Activated T-helper 1 cell treated with anti-CD3 and anti-CD28 coated beads, Interleukin-12 subunit alpha, Interleukin-12 subunit beta, Interleukin-2, Interleukin-4 antibody, amounts not matched to agents 30 ng/mL and 10 ng/mL and 1 ng/mL, durations not matched to agents 14 hours and 24 hours and 36 hours (primary cell): ENCODE measurements at regions of chrX and their contacts with region 1.

Region 1: DNA sequence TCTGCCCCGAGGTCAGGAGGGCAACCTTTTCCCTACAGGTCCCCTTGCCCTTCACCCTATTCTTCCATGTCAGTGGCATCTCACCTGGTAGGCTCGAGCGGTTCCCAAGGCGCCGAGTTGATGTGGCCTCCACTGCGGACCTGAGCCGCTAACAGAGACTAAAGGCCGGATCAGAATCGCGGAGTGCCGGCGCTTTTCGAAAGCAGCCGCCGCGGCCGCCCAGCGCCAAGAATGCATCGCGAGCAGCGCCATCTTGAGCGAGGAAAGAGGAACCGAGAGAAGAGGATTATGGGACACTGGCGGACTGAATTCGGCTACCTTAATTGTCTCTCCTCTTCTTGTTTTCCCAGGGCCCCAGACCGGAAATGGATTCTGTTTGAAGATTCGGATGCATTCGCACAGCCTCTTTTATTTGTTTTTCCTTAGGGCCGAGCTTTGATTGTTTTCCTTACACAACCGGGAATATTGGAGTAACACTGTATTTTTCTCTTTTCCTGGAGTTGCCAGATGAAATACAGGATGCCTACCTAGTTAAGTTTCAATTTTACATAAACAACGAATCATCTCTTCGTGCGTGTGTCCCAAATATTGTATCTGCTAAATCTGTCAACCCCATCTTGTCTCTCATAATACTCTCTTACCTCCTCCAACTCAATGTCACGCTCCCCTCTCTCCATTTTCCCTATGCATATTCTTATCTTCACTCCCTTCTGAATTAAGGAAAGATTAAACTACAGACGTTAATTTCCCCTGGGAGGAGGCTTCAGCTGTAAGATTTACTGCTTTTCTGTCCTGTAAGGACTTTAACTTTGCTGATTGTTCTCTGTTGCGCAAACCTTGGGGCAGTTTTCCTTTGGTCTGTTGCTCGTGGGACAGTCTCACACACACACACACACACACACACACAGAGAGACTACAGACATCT is at the start of gene ABCB7:
- DNase-seq: peak; percentile 52
- H3K4me3 Mint-ChIP-seq: peak within 1 kb of the TSS; percentile 100
- H3K27ac Mint-ChIP-seq: peak within 1 kb of the TSS; percentile 98
- H3K4me1 Mint-ChIP-seq: peaks cover 40% of the 10 kb centered on the region
- H3K27me3 Mint-ChIP-seq: no peaks in the 10 kb centered on the region
- total RNA-seq, gene ABCB7: 37.4 and 38.1 TPM in 2 replicates

Region 2: DNA sequence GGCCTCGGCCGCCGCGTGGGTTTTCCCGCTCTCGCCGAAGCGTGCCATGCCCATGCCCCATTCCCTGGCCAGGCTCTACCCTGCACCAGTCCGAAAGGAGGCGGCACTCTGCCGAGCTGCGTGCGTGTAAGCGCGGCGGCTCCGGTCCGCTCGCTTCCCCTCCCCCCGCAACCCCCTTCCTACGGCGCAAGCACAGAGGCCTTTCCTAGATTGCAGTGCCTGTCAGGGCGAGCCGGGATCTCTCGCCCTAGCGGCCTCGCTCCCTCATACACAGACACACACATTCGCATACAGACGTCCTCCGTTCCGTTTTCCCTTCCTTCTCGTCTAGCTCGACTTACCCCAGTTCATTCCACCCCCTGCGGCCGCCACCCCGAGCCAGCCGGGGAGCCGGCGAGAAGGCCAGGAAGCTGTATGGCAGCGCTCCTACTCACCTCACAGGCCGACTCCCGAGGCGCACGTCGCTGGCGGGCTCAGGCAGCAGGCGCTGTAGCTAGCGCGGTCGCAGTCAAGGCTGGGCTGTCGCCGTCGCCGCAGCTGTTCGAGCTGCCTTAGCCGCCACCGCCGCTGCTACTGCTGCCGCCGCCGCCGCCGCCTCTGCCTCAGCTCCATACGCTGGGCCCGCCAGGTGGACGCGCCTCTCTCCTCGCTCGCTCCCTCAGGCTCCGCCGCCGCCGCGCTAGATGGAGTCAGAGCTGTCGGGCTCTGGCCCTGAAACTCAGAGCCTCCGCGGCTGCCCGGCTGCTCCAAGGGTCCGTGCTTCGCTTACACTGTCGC is 231.6 kb before region 1 on chrX:
- intact Hi-C with region 1: loop called (anchors 10 kb)
- DNase-seq: peak; percentile 20
- H3K4me3 Mint-ChIP-seq: peak overlapping the region; percentile 87
- H3K27ac Mint-ChIP-seq: peak overlapping the region; percentile 90
- H3K4me1 Mint-ChIP-seq: no peaks in the 10 kb centered on the region
- H3K27me3 Mint-ChIP-seq: peaks cover 5% of the 10 kb centered on the region

Region 3: DNA sequence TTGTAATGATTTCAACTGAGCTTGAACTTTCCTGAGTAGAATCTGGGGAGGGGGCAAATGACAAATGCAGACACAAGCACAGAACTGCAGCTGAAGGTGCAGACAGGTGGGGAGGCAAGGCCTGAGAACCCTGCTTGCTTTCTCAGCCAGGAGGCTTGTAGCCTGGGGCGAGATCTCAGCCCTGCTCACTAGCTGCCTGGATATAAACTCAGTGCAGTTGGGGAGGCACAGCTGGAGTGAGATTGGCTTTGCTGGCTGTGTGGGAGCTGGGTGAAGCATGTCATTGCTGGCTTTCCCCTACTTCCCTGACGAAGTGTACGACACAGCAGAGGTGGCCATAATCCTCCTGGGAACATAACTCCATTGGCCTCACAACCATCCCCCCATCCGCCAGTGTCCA is 175.5 kb before region 1 on chrX:
- intact Hi-C with region 1: no loop called
- DNase-seq: no peak
- H3K4me3 Mint-ChIP-seq: no peak overlapping the region
- H3K27ac Mint-ChIP-seq: no peak overlapping the region
- H3K4me1 Mint-ChIP-seq: no peaks in the 10 kb centered on the region
- H3K27me3 Mint-ChIP-seq: no peaks in the 10 kb centered on the region

Region 4: DNA sequence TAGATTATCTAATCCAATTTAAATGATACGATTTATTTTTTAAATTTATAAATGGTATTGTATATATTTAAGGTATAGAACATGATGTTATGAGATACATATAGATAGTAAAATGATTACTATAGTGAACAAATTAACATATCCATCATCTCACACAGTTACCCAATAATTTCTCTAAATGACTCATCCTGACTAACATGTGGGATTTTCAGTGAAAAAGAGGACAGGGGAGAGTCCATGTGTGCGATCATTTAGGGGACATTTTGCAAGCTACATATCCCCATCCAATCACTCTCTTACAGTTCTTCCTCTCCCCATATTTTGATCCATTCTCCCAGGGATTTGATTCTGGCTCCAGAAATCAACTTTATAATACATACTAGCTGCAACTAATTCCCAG is 88.4 kb before region 1 on chrX:
- intact Hi-C with region 1: loop called (anchors 5 kb)
- DNase-seq: no peak
- H3K4me3 Mint-ChIP-seq: no peak overlapping the region
- H3K27ac Mint-ChIP-seq: peak overlapping the region; percentile 44
- H3K4me1 Mint-ChIP-seq: peaks cover 4% of the 10 kb centered on the region
- H3K27me3 Mint-ChIP-seq: no peaks in the 10 kb centered on the region

Region 5: GRCh38 chrX:75273483-75273882 is 117.2 kb after region 1 on chrX:
- intact Hi-C with region 1: loop called (anchors 1 kb)
- DNase-seq: no peak
- H3K4me3 Mint-ChIP-seq: peak overlapping the region; percentile 94
- H3K27ac Mint-ChIP-seq: peak overlapping the region; percentile 96
- H3K4me1 Mint-ChIP-seq: peaks cover 41% of the 10 kb centered on the region
- H3K27me3 Mint-ChIP-seq: no peaks in the 10 kb centered on the region

Region 6: DNA sequence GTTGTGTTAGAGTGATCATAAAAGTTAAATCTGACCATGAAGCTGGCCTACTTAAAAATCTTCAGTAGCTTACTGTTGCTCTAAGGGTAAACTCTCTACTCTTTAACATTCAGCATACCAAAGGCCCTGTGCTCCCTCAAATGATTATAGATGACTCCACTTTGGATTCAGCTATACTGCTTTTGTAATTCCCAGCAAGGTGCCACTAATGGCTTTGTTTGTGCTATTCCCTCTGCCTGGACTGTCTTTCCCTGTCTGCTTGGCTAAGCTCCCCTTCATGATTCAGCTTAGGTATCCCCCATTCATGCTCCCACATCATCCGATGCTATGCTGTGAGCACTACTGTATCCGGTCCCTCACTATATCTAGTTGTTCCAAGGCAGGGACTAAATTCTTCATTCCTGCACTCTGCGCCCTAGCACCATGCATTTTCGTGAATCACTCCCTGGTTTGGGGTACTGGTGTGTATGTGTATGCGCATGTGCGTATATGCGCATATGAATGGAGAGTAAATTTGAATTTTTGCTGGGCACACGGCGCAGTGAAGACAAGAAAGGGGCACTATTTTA is 1016.1 kb after region 1 on chrX:
- intact Hi-C with region 1: loop called (anchors 2 kb)
- DNase-seq: no peak
- H3K4me3 Mint-ChIP-seq: peak overlapping the region; percentile 94
- H3K27ac Mint-ChIP-seq: peak overlapping the region; percentile 98
- H3K4me1 Mint-ChIP-seq: peaks cover 38% of the 10 kb centered on the region
- H3K27me3 Mint-ChIP-seq: no peaks in the 10 kb centered on the region